Endothelial cell of umbilical vein (primary cell): ENCODE measurements at regions of chr9 and their contacts with region 1.

Region 1: DNA sequence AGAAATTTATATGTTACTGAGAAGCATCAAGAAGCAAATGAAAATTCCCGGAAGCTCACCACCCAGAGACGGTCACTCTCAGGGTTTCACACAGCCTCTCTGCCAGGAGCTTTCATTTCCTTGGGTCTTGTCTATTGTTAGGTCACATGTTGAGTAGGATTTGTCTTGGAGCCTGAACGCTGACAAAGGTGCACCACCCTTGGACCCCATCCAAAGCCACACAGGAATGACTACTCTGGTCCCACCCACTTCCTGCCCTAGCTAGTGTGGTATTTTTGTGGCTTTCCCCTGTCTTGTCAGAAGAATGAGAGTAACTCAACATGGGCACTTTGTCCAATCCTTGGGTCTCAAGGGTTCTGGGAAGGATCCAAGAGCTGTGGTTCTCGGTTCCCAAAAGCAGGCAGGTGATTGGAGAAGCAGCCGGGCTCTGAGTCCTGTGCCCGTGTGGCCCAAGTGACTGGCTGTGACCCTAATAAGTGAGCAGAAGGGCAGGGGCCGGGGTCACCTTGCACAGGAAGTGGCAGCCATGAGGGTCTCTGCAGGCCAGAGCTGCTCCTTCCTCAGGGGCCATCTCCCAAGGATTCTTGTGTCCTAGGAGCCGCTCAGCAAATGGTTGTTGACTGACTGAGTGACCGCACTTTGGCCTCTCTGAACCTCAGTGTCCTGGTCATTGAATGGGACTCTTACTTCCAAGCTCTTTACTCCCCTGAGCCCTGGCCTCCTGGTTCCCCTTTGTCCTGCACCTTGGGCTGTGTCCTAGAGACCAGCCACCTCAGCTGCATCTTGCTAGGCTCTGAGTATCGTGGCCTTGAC is 6.9 kb downstream of the FGD3 start:
- DNase-seq: no peak
- H3K4me3 ChIP-seq: no peak overlapping the region
- H3K27ac ChIP-seq: no peak overlapping the region
- H3K4me1 ChIP-seq: no peaks in the 10 kb centered on the region
- H3K27me3 ChIP-seq: no peaks in the 10 kb centered on the region
- CTCF ChIP-seq: no peak
- POLR2A ChIP-seq: no peak

Region 2: GRCh38 chr9:93302551-93303257 is 348.4 kb after region 1 on chr9:
- CTCF ChIA-PET with region 1: interaction called, 8 read pairs
- POLR2A ChIA-PET with region 1: no interaction called
- dilution Hi-C with region 1: no loop called
- intact Hi-C with region 1: loop called (anchors 1 kb)
- DNase-seq: peak; percentile 44
- H3K4me3 ChIP-seq: no peak overlapping the region
- H3K27ac ChIP-seq: no peak overlapping the region
- H3K4me1 ChIP-seq: no peaks in the 10 kb centered on the region
- H3K27me3 ChIP-seq: no peaks in the 10 kb centered on the region
- CTCF ChIP-seq: peak; percentile 53 to 82
- POLR2A ChIP-seq: no peak